ENCODE measurements at regions of chr11 and their contacts with region 1.

Region 1: DNA sequence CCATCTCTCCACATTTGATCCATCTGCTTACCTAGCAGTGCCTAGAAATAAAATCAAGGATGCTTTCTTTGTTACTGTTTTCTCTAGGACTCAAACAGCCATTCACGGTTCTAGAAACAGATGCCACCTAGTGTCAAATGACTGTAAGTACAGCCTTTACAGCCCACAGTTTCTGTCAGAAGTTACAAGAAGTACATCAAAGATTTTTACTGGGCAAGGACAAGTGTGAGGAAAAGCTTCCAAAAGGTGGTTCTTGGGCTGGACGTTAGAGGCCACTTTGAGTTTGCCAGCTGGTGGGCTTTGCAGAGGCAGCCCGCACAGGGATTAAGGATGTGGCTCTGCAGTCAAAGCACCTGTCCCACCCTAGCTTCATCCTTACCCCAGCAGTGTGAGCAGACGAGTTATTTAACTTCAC is 6.9 kb downstream of the KMT5B start:
- DNase-seq: no peak
- H3K4me3 Mint-ChIP-seq: no peak overlapping the region
- H3K27ac Mint-ChIP-seq: no peak overlapping the region
- H3K4me1 Mint-ChIP-seq: peaks cover 36% of the 10 kb centered on the region
- H3K27me3 Mint-ChIP-seq: peaks cover 4% of the 10 kb centered on the region

Region 2: GRCh38 chr11:68009391-68010089 is 196.7 kb before region 1 on chr11:
- intact Hi-C with region 1: loop called (anchors 1 kb)
- DNase-seq: no peak
- H3K4me3 Mint-ChIP-seq: no peak overlapping the region
- H3K27ac Mint-ChIP-seq: no peak overlapping the region
- H3K4me1 Mint-ChIP-seq: peaks cover 15% of the 10 kb centered on the region
- H3K27me3 Mint-ChIP-seq: no peaks in the 10 kb centered on the region

Region 3: DNA sequence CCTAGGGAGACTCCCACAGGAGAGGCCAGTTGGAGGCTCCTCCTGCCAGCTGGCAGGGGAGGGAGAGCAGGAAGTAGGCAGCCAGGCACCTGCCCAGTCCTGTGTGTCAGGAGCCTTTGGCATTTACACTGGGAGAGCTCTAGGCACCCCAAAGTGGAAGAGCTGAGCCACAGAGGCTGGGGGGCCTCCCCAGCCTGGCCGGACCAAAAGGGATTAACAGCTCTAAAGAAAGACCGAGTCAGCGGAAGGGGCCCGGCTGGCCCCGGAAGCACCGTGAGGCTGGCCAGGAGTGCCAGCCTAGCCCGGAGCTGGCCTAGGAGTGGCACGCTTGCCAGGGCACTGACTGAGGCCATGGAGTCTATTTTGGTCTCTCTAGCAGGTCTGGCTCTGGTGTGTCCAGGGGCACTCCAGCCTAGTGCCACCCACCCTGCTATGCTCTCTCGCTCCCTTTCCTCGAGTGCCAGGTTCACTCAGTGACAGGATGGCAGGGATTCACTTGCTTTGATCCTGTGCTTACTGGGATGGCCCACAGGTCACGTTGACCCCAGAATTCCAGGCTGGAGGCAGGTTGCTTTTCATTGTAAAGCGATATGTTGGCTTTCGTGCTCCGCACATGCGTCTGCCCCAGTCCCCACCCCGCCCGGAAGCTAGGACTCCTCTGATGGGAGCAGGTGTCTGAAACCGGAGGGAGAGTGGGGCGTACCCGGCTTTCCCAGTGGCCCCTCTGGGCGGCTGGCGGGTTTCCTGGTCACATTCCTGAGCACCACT is 10.2 kb after region 1 on chr11:
- intact Hi-C with region 1: no loop called
- DNase-seq: no peak
- H3K4me3 Mint-ChIP-seq: no peak overlapping the region
- H3K27ac Mint-ChIP-seq: no peak overlapping the region
- H3K4me1 Mint-ChIP-seq: peaks cover 23% of the 10 kb centered on the region
- H3K27me3 Mint-ChIP-seq: peaks cover 20% of the 10 kb centered on the region

Region 4: DNA sequence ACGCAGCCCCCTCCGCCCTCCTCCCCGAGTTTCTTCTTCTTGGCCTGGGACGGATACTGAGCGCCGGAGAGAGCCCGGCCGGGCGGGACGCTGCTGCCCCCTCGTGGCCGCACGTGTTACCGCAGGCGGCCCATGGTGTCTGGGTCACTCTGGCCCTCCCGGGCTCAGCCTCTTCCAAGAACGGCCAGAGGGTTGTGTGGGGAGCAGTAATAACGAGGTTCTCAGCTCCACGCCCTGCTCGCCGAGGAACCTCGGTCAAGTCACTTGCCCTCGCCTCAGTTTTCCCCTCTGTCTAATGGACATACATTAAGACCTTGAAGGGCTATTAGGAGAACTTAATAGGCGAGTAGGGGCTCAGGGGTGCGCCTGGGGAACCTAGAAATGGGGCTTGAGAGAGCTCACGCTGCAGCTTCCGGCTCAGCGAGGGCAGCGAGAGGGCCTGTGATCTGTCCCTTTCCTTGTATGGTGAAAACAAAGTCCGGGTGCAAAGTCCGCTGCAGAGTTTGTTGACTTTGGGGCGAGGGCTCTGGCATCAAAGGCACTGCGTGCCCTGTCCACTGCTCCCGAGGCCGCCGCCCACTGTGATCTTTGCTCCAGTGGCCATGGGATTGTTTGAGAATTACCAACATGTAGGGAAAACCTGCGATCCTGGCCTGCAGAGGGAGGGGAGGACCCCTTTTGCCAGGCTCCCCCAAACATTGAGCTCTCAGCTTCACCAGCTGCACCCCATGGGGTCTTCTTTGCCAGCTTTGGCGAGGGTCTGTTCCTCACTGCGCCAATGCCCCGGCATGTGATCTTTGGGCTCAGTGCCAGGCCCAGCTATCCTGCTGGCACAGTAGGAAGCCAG is 91.8 kb after region 1 on chr11:
- intact Hi-C with region 1: loop called (anchors 5 kb)
- DNase-seq: peak; percentile 60
- H3K4me3 Mint-ChIP-seq: no peak overlapping the region
- H3K27ac Mint-ChIP-seq: no peak overlapping the region
- H3K4me1 Mint-ChIP-seq: no peaks in the 10 kb centered on the region
- H3K27me3 Mint-ChIP-seq: peaks cover 8% of the 10 kb centered on the region